Activated CD8-positive, alpha-beta T cell treated with anti-CD3 and anti-CD28 coated beads for 36 hours (primary cell): ENCODE measurements at regions of chr9 and their contacts with region 1.

Region 1: GRCh38 chr9:126500684-126501382 is 112.9 kb upstream of the LMX1B start:
- DNase-seq: peak; percentile 70
- ATAC-seq: peak; percentile 76
- H3K4me3 Mint-ChIP-seq: no peak overlapping the region
- H3K27ac Mint-ChIP-seq: no peak overlapping the region
- H3K4me1 Mint-ChIP-seq: peaks cover 11% of the 10 kb centered on the region
- H3K27me3 Mint-ChIP-seq: peaks cover 10% of the 10 kb centered on the region
- CTCF ChIP-seq: peak; percentile 96

Region 2: GRCh38 chr9:126354887-126355770 is 145.7 kb before region 1 on chr9:
- CTCF ChIA-PET with region 1: no interaction called
- POLR2A ChIA-PET with region 1: no interaction called
- intact Hi-C with region 1: no loop called
- DNase-seq: no peak
- ATAC-seq: no peak
- H3K4me3 Mint-ChIP-seq: no peak overlapping the region
- H3K27ac Mint-ChIP-seq: no peak overlapping the region
- H3K4me1 Mint-ChIP-seq: peaks cover 22% of the 10 kb centered on the region
- H3K27me3 Mint-ChIP-seq: no peaks in the 10 kb centered on the region
- CTCF ChIP-seq: no peak

Region 3: GRCh38 chr9:126375386-126375785 is 125.4 kb before region 1 on chr9:
- CTCF ChIA-PET with region 1: no interaction called
- POLR2A ChIA-PET with region 1: no interaction called
- intact Hi-C with region 1: no loop called
- DNase-seq: no peak
- ATAC-seq: peak; percentile 42
- H3K4me3 Mint-ChIP-seq: no peak overlapping the region
- H3K27ac Mint-ChIP-seq: no peak overlapping the region
- H3K4me1 Mint-ChIP-seq: peaks cover 29% of the 10 kb centered on the region
- H3K27me3 Mint-ChIP-seq: no peaks in the 10 kb centered on the region
- CTCF ChIP-seq: no peak

Region 4: GRCh38 chr9:126482361-126483044 is 18.3 kb before region 1 on chr9:
- CTCF ChIA-PET with region 1: interaction called, 19 read pairs
- POLR2A ChIA-PET with region 1: interaction called, 3 read pairs
- intact Hi-C with region 1: no loop called
- DNase-seq: no peak
- ATAC-seq: no peak
- H3K4me3 Mint-ChIP-seq: no peak overlapping the region
- H3K27ac Mint-ChIP-seq: no peak overlapping the region
- H3K4me1 Mint-ChIP-seq: peaks cover 14% of the 10 kb centered on the region
- H3K27me3 Mint-ChIP-seq: no peaks in the 10 kb centered on the region
- CTCF ChIP-seq: no peak

Region 5: DNA sequence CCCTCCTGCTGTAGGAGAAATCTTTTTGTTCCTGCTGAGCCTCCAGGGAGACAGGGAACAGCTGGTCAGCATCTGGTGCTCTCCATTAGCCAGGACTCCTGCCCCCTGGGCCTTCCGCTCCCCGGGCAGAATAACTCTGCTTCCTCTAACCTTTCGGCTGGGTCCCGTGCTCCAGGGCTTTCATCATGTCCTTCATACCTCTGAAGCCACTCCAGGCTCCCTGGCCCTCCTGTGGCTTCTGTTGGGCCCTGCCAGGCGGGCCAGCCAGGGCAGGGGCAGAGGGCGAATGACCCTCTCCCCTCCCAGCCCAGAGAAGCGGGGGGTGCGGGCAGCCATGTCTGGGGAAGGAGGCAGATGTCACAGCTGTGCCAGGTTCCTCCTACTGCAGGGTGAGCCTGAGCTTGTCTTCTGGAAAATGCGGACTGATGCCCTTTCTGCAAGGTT is 31.2 kb after region 1 on chr9:
- CTCF ChIA-PET with region 1: interaction called, 26 read pairs
- POLR2A ChIA-PET with region 1: no interaction called
- intact Hi-C with region 1: no loop called
- DNase-seq: no peak
- ATAC-seq: no peak
- H3K4me3 Mint-ChIP-seq: no peak overlapping the region
- H3K27ac Mint-ChIP-seq: no peak overlapping the region
- H3K4me1 Mint-ChIP-seq: no peaks in the 10 kb centered on the region
- H3K27me3 Mint-ChIP-seq: peaks cover 2% of the 10 kb centered on the region
- CTCF ChIP-seq: no peak

Region 6: GRCh38 chr9:126558051-126558665 is 57.3 kb after region 1 on chr9:
- CTCF ChIA-PET with region 1: interaction called, 198 read pairs
- POLR2A ChIA-PET with region 1: interaction called, 3 read pairs
- intact Hi-C with region 1: loop called (anchors 2 kb)
- DNase-seq: peak; percentile 76
- ATAC-seq: peak; percentile 97
- H3K4me3 Mint-ChIP-seq: no peak overlapping the region
- H3K27ac Mint-ChIP-seq: no peak overlapping the region
- H3K4me1 Mint-ChIP-seq: no peaks in the 10 kb centered on the region
- H3K27me3 Mint-ChIP-seq: peaks cover 26% of the 10 kb centered on the region
- CTCF ChIP-seq: peak; percentile 87

Region 7: DNA sequence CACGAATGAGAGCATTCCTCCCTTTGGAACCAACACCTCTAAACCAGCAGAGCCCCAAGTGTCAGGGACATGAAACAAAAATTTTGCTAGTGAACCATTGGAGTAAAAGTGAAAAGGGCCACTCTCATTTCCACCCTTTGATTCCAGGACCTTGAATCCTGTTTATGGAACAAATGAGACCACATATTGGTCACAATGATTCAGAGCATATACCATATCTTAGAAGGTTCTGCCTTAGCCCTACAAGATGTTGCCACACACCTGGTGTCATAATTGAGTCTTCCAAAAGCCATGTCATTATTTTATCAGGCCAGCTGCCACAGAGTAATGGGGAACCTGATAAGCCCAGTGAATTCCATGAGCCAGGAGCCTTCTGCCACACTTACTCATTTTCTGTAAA is 237.7 kb after region 1 on chr9:
- CTCF ChIA-PET with region 1: no interaction called
- POLR2A ChIA-PET with region 1: no interaction called
- intact Hi-C with region 1: no loop called
- DNase-seq: no peak
- ATAC-seq: no peak
- H3K4me3 Mint-ChIP-seq: no peak overlapping the region
- H3K27ac Mint-ChIP-seq: no peak overlapping the region
- H3K4me1 Mint-ChIP-seq: peaks cover 2% of the 10 kb centered on the region
- H3K27me3 Mint-ChIP-seq: no peaks in the 10 kb centered on the region
- CTCF ChIP-seq: no peak